Activated CD4-positive, alpha-beta T cell treated with anti-CD3 and anti-CD28 coated beads for 36 hours (primary cell): ENCODE measurements at regions of chr11 and their contacts with region 1.

Region 1: GRCh38 chr11:3807909-3808860 is at the start of gene PGAP2:
- DNase-seq: peak; percentile 77
- ATAC-seq: peak; percentile 78
- H3K4me3 Mint-ChIP-seq: peak within 1 kb of the TSS; percentile 93
- H3K27ac Mint-ChIP-seq: peak within 1 kb of the TSS; percentile 94
- H3K4me1 Mint-ChIP-seq: peaks cover 24% of the 10 kb centered on the region
- H3K27me3 Mint-ChIP-seq: no peaks in the 10 kb centered on the region
- total RNA-seq, gene PGAP2: 33.6 to 39.2 TPM

Region 2: DNA sequence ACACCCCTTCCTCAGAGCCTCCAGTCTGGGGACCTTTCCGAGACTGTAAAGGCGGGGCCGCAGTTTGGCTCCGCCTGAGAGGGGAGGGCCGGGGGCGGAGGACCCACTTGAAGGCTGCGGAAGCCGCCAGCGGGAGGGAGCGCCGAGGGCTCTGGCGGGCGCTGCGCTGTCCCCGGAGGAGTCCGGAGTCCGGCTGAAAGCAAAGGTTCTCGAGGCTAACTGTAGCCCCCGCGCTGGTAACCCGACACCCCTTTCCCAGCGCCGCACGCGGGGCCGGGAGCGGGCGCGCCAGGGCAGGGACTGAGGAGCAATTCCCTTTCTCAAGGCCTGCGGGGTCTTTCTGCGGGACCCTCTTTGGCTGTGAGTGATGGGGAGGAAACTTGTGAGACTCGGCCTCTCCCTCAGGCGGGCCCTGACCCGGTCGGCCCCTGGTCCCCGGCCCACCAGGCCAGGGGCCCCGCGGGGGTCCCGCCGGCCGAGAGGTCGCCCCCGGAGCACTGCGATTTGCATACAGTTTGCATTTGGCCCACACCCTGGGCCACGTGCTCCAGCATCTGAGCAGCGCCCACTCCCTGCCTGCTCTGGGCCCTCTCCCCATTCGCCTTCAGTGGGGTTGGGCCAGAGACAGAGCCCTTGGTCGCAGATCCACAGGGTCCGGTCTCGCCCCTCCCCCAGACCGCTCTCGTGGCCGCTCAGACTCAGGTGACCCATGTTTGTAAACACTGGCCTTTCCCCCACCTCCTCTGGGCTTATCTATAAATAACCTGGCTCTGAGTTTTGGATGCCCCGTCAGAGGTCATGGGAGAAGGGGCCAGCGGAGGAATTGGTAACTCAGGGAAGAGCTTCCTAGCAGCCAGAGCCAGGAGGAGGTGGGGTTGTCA is 165.9 kb before region 1 on chr11:
- CTCF ChIA-PET with region 1: no interaction called
- POLR2A ChIA-PET with region 1: no interaction called
- intact Hi-C with region 1: loop called in 1 of 2 experiments (anchors 2 kb)
- DNase-seq: peak; percentile 82
- ATAC-seq: peak; percentile 99
- H3K4me3 Mint-ChIP-seq: peak overlapping the region; percentile 60
- H3K27ac Mint-ChIP-seq: no peak overlapping the region
- H3K4me1 Mint-ChIP-seq: peaks cover 6% of the 10 kb centered on the region
- H3K27me3 Mint-ChIP-seq: peaks cover 22% of the 10 kb centered on the region

Region 3: GRCh38 chr11:3753110-3753509 is 55.1 kb before region 1 on chr11:
- CTCF ChIA-PET with region 1: interaction called, 4 read pairs
- POLR2A ChIA-PET with region 1: no interaction called
- intact Hi-C with region 1: loop called in 1 of 2 experiments (anchors 5 kb)
- DNase-seq: no peak
- ATAC-seq: no peak
- H3K4me3 Mint-ChIP-seq: no peak overlapping the region
- H3K27ac Mint-ChIP-seq: peak overlapping the region; percentile 37
- H3K4me1 Mint-ChIP-seq: peaks cover 1% of the 10 kb centered on the region
- H3K27me3 Mint-ChIP-seq: no peaks in the 10 kb centered on the region

Region 4: DNA sequence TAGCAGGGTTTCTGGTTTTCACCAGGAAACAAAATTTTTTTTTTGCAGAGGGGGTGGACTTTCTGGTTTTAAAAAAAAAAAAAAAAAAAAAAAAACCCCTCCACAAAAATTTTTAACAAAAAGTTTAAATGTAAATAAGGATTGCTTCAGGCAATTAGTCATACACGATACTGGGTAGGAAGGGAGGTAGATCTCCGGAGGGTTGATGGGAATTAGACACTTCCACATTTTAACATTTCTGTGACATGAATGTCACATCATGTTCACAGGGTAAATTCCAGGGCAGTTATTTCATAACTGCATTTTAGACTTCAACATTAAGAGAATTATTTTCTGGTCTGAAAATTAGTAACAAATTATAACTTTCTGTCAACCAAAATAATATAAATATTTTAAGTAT is 26.8 kb before region 1 on chr11:
- CTCF ChIA-PET with region 1: interaction called, 17 read pairs
- POLR2A ChIA-PET with region 1: interaction called, 7 read pairs
- intact Hi-C with region 1: loop called (anchors 1 to 2 kb)
- DNase-seq: no peak
- ATAC-seq: no peak
- H3K4me3 Mint-ChIP-seq: no peak overlapping the region
- H3K27ac Mint-ChIP-seq: peak overlapping the region; percentile 72
- H3K4me1 Mint-ChIP-seq: peaks cover 47% of the 10 kb centered on the region
- H3K27me3 Mint-ChIP-seq: no peaks in the 10 kb centered on the region

Region 5: GRCh38 chr11:3797329-3798095 is 10.7 kb before region 1 on chr11 and contains the start of gene NUP98:
- CTCF ChIA-PET with region 1: interaction called, 33 read pairs
- POLR2A ChIA-PET with region 1: interaction called, 5 read pairs
- intact Hi-C with region 1: loop called (anchors 1 kb)
- DNase-seq: peak; percentile 100
- ATAC-seq: peak; percentile 98
- H3K4me3 Mint-ChIP-seq: peak within 1 kb of the TSS; percentile 99
- H3K27ac Mint-ChIP-seq: peak within 1 kb of the TSS; percentile 100
- H3K4me1 Mint-ChIP-seq: peaks cover 39% of the 10 kb centered on the region
- H3K27me3 Mint-ChIP-seq: no peaks in the 10 kb centered on the region
- total RNA-seq, gene NUP98: 96.0 to 134 TPM

Region 6: DNA sequence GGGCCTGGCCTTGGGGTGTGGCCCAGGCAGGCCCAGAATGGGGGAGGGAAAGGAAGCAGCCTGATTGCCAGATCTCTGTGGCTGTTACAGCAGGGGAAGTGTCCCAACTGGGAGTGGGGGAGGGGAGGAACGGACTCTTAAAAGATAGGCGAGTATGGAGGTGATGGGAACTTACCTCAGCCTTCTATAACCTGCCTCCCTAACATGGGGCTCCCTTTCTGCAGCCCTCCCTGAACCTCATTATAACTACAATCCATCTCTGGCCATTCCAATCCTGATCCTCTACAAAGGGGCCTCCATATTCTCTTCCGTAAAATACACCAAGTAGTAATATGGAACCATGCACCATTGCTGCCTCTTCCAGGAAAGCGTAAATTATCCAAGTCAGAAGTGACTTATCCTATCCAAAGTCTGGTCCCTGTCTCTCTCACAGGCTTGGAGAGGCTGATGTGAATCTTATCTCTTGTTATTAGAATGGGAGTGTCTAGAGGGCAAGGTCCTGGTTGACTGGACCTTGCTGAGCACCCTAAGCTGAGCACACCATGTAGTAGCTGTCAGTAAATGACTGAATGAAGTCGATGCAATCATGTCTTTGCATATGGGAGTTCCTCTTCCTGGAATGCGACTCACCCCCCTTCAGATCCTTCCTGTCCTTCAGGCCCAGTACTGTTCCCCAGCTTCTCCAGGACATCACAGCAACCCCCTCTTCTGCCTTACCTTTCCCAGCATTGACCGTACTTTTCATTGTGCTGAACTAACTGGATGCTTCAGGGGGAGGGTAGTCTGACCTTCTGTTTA is 26.7 kb after region 1 on chr11:
- CTCF ChIA-PET with region 1: interaction called, 11 read pairs
- POLR2A ChIA-PET with region 1: interaction called, 3 read pairs
- intact Hi-C with region 1: no loop called
- DNase-seq: peak; percentile 32
- ATAC-seq: no peak
- H3K4me3 Mint-ChIP-seq: peak overlapping the region; percentile 93
- H3K27ac Mint-ChIP-seq: peak overlapping the region; percentile 92
- H3K4me1 Mint-ChIP-seq: peaks cover 87% of the 10 kb centered on the region
- H3K27me3 Mint-ChIP-seq: no peaks in the 10 kb centered on the region